ENCODE measurements at regions of chr10 and their contacts with region 1.

Region 1: GRCh38 chr10:126930883-126931503 is 25.8 kb downstream of the DOCK1 start:
- DNase-seq: peak; percentile 64
- ATAC-seq: peak; percentile 71
- H3K4me3 ChIP-seq: no peak overlapping the region
- H3K27ac ChIP-seq: no peak overlapping the region
- H3K4me1 ChIP-seq: peaks cover 22% of the 10 kb centered on the region
- H3K27me3 ChIP-seq: no peaks in the 10 kb centered on the region
- CTCF ChIP-seq: no peak
- POLR2A ChIP-seq: no peak
- RAD21 ChIP-seq: no peak

Region 2: DNA sequence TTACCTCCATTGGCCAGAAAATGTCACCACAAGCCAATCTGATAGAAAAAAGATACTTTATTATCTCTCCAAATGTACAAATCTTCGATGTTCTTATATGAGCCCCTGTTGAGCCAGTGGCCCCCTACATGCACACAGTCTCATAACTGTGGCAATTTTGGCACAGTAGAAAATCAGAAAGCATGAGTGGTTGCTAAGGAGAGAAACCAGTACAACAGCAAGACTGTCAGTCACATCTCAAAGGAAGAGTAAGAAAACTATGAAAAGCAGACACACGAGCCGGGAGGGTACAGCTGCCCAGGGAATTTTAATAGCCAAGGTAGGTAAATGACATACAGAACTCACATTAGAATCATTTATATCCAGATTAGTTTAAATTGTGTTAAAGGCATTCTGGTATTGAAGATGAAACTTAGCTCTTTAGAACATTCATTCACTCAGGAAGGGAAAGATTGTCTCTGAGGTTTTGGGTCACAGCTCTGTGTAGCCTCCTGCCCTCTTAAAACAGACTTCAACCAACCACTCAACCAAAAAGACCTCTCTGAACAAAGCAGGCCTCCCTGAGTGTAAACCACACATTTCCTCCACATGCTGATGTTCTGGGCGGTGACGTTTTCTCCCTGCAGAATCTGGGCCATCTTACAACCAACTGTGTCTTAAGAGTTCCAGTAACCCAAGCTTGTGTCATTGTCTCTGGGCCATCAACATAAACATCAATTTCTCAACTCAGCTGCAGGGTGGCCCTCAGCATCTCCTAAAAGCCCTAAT is 461.9 kb before region 1 on chr10:
- CTCF ChIA-PET with region 1: no interaction called
- POLR2A ChIA-PET with region 1: no interaction called
- dilution Hi-C with region 1: no loop called
- in situ Hi-C with region 1: no loop called
- intact Hi-C with region 1: no loop called
- DNase-seq: no peak
- ATAC-seq: no peak
- H3K4me3 ChIP-seq: no peak overlapping the region
- H3K27ac ChIP-seq: no peak overlapping the region
- H3K4me1 ChIP-seq: no peaks in the 10 kb centered on the region
- H3K27me3 ChIP-seq: peaks cover 17% of the 10 kb centered on the region
- CTCF ChIP-seq: no peak
- POLR2A ChIP-seq: no peak
- RAD21 ChIP-seq: no peak

Region 3: DNA sequence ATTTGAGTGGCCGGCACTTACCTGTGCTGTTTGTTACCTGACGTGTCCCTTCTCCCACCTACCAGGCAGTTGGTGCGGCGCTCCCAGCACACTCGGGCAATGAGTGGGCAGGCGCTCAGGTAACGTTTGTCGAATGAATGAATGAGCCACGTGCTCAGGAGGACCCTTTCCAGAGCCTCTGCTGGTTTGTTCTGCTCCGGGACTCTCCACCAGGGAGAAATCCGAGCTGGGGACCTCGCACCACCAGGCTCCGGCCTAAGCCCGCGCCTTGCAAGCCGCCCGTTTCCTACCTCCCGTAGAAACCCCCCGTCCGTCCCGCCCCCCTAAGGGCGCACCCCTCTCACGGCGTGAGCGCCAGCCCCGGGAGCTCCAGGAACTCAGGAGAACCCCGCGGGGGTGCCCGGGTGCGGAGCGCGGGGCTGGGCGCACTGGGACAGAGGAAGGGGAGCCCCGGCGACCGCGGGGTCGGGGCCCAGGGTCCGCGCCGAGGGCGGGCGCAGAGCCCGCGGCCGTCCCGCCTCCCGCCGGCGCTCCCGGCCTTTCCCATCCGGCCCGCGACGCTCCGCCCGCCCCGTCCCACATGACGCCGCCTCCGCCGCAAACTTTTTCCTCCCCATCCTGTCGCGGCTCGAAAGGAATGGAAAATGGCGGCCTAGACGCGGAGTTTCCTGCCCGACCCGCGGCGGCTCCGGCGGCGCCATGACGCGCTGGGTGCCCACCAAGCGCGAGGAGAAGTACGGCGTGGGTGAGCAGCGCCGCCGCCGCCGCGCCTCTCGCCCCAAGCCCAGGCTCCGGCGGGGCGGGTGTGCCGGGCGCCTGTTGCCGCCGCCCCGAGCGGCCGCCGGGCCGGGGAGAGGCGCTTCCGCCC is 25.9 kb before region 1 on chr10 and contains the start of gene DOCK1:
- CTCF ChIA-PET with region 1: no interaction called
- POLR2A ChIA-PET with region 1: no interaction called
- dilution Hi-C with region 1: no loop called
- in situ Hi-C with region 1: no loop called
- intact Hi-C with region 1: no loop called
- DNase-seq: peak; percentile 68
- ATAC-seq: peak; percentile 79
- H3K4me3 ChIP-seq: peak within 1 kb of the TSS; percentile 62
- H3K27ac ChIP-seq: peak within 1 kb of the TSS; percentile 86
- H3K4me1 ChIP-seq: peaks cover 23% of the 10 kb centered on the region
- H3K27me3 ChIP-seq: no peaks in the 10 kb centered on the region
- CTCF ChIP-seq: no peak
- POLR2A ChIP-seq: no peak
- RAD21 ChIP-seq: no peak
- total RNA-seq, gene DOCK1: 71.0 and 79.2 TPM in 2 replicates

Region 4: DNA sequence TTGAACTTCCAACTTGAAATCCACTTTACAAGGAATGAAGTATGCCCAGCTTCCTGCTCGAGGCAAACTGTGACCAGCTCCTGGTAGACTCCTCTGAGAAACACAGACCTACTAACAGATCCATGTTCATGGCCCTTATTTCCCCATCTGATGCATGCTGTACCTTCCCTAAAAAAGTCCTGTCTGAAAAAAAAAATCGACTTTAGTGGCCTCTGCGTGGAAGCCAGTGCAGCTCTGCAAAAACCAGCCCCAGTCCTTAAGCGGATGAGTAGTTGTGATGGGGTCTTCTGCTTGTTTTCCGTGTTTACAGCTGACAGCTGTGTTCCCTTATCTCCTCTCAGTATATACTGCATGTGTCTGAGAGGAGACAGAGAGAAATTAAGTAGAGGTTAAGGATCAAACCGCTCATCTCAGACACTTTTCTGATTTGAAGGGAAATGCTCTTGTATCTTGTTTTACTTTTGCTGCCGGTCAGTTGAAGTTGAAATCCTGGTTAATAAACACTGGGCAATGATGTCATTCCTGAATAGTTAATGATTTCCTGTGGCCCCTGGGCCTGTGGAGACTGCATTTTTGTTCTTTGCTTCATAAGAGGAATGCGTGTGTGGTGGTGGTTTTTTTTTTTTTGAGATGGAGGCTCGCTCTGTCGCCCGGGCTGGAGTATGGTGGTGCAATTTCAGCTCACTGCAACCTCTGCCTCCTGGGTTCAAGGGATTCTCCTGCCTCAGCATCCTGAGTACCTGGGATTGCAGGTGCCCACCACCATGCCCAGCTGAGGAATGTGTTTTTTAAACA is 41.8 kb after region 1 on chr10:
- CTCF ChIA-PET with region 1: no interaction called
- POLR2A ChIA-PET with region 1: no interaction called
- dilution Hi-C with region 1: no loop called
- in situ Hi-C with region 1: no loop called
- intact Hi-C with region 1: loop called (anchors 5 kb)
- DNase-seq: peak; percentile 97
- ATAC-seq: peak; percentile 90
- H3K4me3 ChIP-seq: peak overlapping the region; percentile 2; the same call in 1 of the 2 replicates
- H3K27ac ChIP-seq: peak overlapping the region; percentile 89
- H3K4me1 ChIP-seq: peaks cover 10% of the 10 kb centered on the region; the same call in 1 of the 2 replicates
- H3K27me3 ChIP-seq: no peaks in the 10 kb centered on the region
- CTCF ChIP-seq: no peak
- POLR2A ChIP-seq: no peak
- RAD21 ChIP-seq: peak; percentile 7; the same call in 1 of the 2 replicates

Region 5: DNA sequence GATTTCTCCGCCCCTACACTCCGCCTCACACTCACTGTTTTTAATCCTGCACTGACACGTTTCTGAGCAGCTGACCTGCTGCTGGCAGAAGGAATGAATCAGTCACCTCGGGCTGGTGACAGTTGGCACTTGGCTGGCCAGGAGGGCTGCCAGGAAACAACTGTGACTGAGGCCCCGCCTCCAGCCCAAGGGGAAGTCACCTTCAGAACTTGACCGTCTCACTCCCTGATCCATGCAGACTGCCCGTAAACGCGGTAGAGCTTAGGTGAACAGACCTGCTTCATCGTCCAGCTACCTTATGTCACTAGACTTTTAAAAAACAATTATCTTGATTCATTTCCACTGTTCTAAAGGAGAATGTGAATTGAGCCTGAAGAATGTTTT is 81.8 kb after region 1 on chr10:
- CTCF ChIA-PET with region 1: no interaction called
- POLR2A ChIA-PET with region 1: no interaction called
- dilution Hi-C with region 1: no loop called
- in situ Hi-C with region 1: no loop called
- intact Hi-C with region 1: no loop called
- DNase-seq: no peak
- ATAC-seq: no peak
- H3K4me3 ChIP-seq: no peak overlapping the region
- H3K27ac ChIP-seq: no peak overlapping the region
- H3K4me1 ChIP-seq: peaks cover 8% of the 10 kb centered on the region; the same call in 1 of the 2 replicates
- H3K27me3 ChIP-seq: no peaks in the 10 kb centered on the region
- CTCF ChIP-seq: no peak
- POLR2A ChIP-seq: no peak
- RAD21 ChIP-seq: no peak